MCF 10A (cell line): ENCODE measurements at regions of chr5 and their contacts with region 1.

Region 1: GRCh38 chr5:139403787-139404483 is at the start of gene SPATA24:
- DNase-seq: peak; percentile 99
- H3K4me3 Mint-ChIP-seq: peak within 1 kb of the TSS; percentile 97
- H3K27ac Mint-ChIP-seq: peak within 1 kb of the TSS; percentile 99
- H3K4me1 Mint-ChIP-seq: peaks cover 23% of the 10 kb centered on the region
- H3K27me3 Mint-ChIP-seq: no peaks in the 10 kb centered on the region
- CTCF ChIP-seq: no peak
- total RNA-seq, gene SPATA24: 9.8 and 11.6 TPM in 2 replicates

Region 2: GRCh38 chr5:139415221-139415861 is 11.4 kb after region 1 on chr5:
- CTCF ChIA-PET with region 1: interaction called, 111 read pairs
- POLR2A ChIA-PET with region 1: interaction called, 16 read pairs
- intact Hi-C with region 1: no loop called
- DNase-seq: peak; percentile 26
- H3K4me3 Mint-ChIP-seq: no peak overlapping the region
- H3K27ac Mint-ChIP-seq: no peak overlapping the region
- H3K4me1 Mint-ChIP-seq: no peaks in the 10 kb centered on the region
- H3K27me3 Mint-ChIP-seq: no peaks in the 10 kb centered on the region
- CTCF ChIP-seq: no peak